Gastrocnemius medialis (tissue), 4 donors: ENCODE measurements at regions of chr20 and their contacts with region 1.

Region 1: DNA sequence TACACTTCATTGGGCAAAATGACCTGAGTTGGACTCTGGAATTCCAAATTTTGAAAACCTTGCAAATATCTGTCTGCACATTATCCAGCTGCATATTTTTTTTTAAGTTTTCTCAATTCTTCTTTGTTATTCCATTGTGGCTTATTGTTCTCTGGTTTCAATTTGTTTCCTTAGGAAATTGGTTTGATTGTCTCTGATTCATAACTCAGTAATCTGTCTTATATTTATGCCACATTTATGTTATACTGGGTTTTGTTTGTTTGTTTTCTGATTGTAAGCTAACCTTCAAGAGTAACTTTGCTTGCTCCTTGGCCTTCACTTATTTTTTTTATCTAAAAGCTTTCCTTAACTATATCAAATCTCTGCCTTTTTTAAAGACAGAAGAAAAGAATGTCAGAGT is 193.3 kb upstream of the PLCB4 start:
- DNase-seq: no peak
- ATAC-seq: no peak
- H3K4me3 ChIP-seq: no peak overlapping the region
- H3K27ac ChIP-seq: no peak overlapping the region
- H3K4me1 ChIP-seq: no peaks in the 10 kb centered on the region
- H3K27me3 ChIP-seq: no peaks in the 10 kb centered on the region
- CTCF ChIP-seq: no peak
- POLR2A ChIP-seq: no peak

Region 2: GRCh38 chr20:8790442-8791074 is 85.0 kb before region 1 on chr20:
- in situ Hi-C with region 1: loop called in 1 of 4 experiments (anchors 25 kb)
- intact Hi-C with region 1: no loop called
- DNase-seq: no peak
- ATAC-seq: no peak
- H3K4me3 ChIP-seq: no peak overlapping the region
- H3K27ac ChIP-seq: no peak overlapping the region
- H3K4me1 ChIP-seq: no peaks in the 10 kb centered on the region
- H3K27me3 ChIP-seq: no peaks in the 10 kb centered on the region
- CTCF ChIP-seq: peak; percentile 57 to 85 (median 78)
- POLR2A ChIP-seq: no peak

Region 3: GRCh38 chr20:8918145-8918544 is 42.6 kb after region 1 on chr20:
- in situ Hi-C with region 1: no loop called
- intact Hi-C with region 1: loop called (anchors 1 kb)
- DNase-seq: no peak
- ATAC-seq: no peak
- H3K4me3 ChIP-seq: no peak overlapping the region
- H3K27ac ChIP-seq: no peak overlapping the region
- H3K4me1 ChIP-seq: no peaks in the 10 kb centered on the region
- H3K27me3 ChIP-seq: no peaks in the 10 kb centered on the region
- CTCF ChIP-seq: no peak
- POLR2A ChIP-seq: no peak